ENCODE measurements at regions of chr2 and their contacts with region 1.

Region 1: DNA sequence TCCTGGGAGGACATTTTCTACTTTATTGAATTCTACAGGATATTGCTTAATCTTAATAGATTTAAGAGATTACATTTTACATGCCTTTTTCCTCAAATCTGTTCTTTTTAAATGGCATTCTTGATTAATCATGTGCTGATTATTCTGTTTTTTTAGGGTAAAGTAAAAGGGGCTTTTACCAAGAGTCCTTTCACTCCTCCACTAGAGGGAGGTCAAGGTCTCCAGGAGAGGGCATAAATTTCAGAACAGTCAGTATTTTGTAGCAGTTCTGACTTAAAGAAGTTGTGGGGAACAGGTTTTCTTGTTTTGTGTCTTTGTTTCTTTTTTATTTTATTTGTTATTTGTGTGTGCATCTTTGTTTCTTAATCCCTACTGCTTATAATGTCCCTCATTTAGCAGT is 25.4 kb downstream of the WDR75 start:
- DNase-seq: no peak

Region 2: GRCh38 chr2:189444322-189444721 is 22.3 kb before region 1 on chr2:
- intact Hi-C with region 1: no loop called
- DNase-seq: no peak

Region 3: GRCh38 chr2:189534854-189535832 is 68.5 kb after region 1 on chr2:
- intact Hi-C with region 1: no loop called
- DNase-seq: no peak

Region 4: DNA sequence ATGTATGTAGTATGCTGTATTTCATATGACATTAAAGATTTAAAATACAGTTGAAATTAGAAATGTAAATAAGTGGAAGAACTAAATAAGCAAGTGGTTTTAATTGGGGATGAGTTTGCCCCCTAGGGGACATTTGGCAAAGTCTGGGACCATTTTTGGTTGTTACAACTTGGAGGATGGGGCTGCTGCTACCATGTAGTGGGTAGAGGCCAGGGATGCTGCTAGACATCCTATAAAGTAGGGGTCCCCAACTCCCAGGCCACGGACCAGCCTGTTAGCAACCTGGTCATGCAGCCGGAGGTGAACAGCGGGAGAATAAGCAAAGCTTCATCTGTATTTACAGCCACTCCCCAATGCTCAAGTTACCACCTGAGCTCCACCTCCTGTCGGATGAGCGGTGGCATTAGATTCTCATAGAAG is 166.7 kb after region 1 on chr2:
- intact Hi-C with region 1: loop called (anchors 5 kb)
- DNase-seq: no peak

Region 5: DNA sequence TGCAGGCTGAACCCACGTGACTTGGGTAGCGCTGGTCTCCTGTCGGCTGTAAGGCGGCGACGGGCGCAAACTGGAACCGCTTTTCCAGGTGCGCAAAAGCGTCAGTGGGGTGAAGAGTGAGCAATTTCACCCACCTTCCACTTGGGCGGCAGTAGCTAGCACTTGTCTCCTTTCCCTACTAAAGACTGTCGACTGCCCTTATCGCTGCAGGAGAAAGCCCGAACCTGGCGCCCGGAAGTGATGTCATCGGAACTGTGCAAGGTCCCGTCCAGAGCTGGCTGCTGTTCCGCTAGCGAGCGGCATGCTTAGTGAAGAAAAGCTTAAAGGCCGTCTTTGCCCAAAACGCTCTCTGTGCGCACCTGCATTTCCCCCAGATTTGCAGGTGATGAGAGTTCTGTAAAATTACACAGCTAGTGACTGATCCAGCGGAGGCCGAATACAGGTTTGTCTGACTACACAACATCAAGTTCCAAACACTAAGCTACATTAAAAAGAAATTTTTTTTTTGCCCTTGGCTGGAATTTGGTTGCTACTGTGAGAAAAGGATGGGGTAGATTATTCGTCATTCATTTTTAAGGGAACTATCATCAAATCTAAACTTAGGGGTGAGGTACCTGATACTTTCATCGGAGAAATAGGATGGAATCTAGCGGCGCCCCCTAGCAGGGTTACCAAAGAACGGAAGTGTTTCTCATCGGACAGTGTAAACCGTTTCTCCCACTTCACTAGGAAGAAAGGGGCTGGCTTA is 296.1 kb after region 1 on chr2 and contains the start of gene OSGEPL1:
- intact Hi-C with region 1: no loop called
- DNase-seq: peak; percentile 96
- total RNA-seq, gene OSGEPL1: 5.4 TPM

Region 6: GRCh38 chr2:189982777-189983394 is 516.2 kb after region 1 on chr2:
- intact Hi-C with region 1: no loop called
- DNase-seq: no peak

Measured in cardiac septum (tissue), 1 donor.